ENCODE measurements at regions of chr15 and their contacts with region 1.

Region 1: DNA sequence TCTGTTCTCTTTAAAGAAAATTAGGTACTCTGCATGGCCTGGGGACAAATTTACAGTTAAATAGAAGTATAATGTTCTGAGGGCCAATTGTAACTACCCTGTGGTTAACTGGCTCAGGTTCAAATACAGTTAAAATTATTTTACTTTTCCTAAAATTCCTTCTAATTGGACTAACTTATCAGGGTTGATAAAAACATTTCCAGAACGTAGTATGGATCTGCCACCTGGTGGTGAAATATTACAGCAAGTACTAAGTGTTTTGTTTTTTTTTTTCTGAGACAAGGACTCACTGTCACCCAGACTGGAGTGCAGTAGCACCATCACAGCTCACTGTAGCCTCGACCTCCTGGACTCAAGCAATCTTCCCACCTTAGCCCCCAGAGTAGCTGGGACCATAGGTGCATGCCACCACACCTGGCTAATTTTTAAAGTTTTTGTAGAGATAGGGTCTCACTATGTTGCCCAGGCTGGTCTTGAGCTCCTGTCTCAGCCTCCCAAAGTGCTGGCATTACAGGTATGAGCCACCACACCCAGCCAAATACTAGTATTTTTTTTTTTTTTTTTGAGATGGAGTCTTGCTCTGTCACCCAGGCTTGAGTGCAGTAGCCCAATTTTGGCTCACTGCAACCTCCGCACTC is 29.2 kb downstream of the NEO1 start:
- DNase-seq: peak; percentile 65
- H3K4me3 ChIP-seq: no peak overlapping the region
- H3K27ac ChIP-seq: no peak overlapping the region
- H3K4me1 ChIP-seq: no peaks in the 10 kb centered on the region
- H3K27me3 ChIP-seq: peaks cover 49 to 77% of the 10 kb centered on the region in 2 experiments
- CTCF ChIP-seq: peak; percentile 21 to 44
- POLR2A ChIP-seq: no peak

Region 2: GRCh38 chr15:72783563-72784237 is 297.7 kb before region 1 on chr15 and contains the start of gene ADPGK:
- CTCF ChIA-PET with region 1: interaction called, 6 read pairs
- POLR2A ChIA-PET with region 1: no interaction called
- dilution Hi-C with region 1: no loop called
- intact Hi-C with region 1: loop called (anchors 1 kb)
- DNase-seq: peak; percentile 94
- H3K4me3 ChIP-seq: peak within 1 kb of the TSS; percentile 49 to 91 (median 61)
- H3K27ac ChIP-seq: peak within 1 kb of the TSS; percentile 61
- H3K4me1 ChIP-seq: peaks cover 10% of the 10 kb centered on the region
- H3K27me3 ChIP-seq: peaks cover 14 to 18% of the 10 kb centered on the region in 2 experiments
- CTCF ChIP-seq: no peak
- POLR2A ChIP-seq: peak; percentile 92
- total RNA-seq, gene ADPGK: 51.0 and 51.7 TPM in 2 replicates

Region 3: DNA sequence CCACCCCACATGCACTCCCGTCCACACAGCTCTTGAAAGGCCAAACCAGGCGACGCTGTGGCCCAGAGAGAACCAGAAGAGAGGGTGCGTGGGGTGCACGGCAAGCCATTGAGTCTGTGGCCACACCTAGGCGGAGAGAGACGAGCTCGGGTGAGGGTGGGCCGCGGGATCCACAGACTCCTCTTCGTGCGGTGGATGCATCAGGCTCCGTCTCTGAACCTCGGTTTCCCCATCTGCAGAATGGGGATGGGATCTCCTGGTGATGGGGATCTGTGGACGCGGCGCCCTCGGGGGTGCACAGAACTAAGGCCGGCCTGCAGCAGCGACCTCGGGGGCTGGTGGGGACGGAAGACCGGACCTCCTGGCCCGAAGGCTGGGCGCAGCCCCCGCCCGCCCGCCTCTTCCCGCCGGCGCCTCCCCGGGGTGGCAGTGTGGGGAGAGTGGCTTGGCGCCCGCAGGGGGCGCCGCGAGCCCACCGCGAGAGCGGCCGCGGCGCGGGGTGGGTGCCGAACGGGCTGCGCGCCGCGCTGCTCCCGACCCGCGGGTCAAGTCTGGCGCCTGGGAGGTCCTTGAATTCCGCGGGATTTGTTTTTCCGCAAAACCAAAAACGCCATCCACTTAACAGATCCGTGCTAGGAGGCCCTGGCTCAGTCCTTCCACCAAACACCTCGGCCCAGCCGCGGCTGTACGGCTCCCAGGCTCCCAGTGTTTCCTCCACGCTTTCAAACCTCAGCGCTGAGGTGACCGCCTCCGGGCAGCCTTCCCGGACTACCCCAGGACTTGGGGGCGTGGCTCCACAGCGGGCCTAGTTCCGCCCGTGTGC is 284.7 kb before region 1 on chr15:
- CTCF ChIA-PET with region 1: interaction called, 7 read pairs
- POLR2A ChIA-PET with region 1: no interaction called
- dilution Hi-C with region 1: no loop called
- intact Hi-C with region 1: loop called (anchors 1 kb)
- DNase-seq: peak; percentile 2
- H3K4me3 ChIP-seq: peak overlapping the region in 2 of 3 experiments; percentile 25 to 40
- H3K27ac ChIP-seq: no peak overlapping the region
- H3K4me1 ChIP-seq: peaks cover 6% of the 10 kb centered on the region
- H3K27me3 ChIP-seq: peaks cover 47 to 51% of the 10 kb centered on the region in 2 experiments
- CTCF ChIP-seq: peak; percentile 30 to 38
- POLR2A ChIP-seq: no peak

Region 4: DNA sequence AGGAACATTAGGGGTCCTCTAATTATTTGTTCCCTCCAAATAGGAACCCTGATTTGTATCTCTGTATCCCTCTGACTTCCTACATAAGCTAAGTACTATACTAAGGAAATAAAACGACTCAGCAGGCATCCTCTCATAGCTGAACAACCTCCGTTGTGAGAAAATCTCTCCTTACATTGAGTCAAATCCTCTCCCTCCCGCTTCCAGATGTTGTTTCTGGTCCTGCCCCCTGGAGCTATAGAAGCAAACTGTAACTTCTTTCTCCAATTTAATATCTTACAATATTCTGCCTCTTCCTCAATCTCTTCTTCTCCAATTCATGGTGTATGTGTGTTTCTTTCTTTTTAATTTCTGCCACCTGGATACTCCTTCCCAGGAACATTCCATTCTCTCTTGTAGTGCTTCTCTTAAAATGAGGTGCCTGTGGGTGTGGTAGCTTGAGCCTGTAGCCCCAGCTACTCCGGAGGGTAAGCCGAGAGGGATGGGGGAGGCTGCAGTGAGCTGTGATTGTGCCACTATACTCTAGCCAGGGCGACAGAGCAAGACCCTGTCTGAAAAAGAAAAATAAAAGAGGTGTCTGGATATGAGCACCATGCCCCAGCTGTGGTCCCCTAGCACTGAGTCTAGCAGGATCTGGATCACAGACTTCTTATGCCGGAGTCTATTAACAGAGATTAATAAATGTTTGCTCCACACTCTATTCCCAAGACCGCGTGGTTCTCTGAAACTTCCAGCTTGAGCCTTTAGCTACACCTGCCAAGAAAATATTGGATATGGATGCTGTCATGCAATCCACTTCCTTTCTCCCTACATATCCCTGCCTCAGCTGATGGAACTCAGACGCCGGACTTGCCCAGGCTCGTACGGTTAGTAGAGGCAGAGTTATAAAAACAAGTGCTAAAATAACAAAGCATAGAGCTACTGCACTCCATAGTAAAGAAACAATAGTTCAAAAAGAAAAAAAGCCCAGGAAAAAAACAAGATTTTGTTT is 72.1 kb before region 1 on chr15:
- CTCF ChIA-PET with region 1: no interaction called
- POLR2A ChIA-PET with region 1: no interaction called
- dilution Hi-C with region 1: no loop called
- intact Hi-C with region 1: no loop called
- DNase-seq: no peak
- H3K4me3 ChIP-seq: no peak overlapping the region
- H3K27ac ChIP-seq: no peak overlapping the region
- H3K4me1 ChIP-seq: no peaks in the 10 kb centered on the region
- H3K27me3 ChIP-seq: peaks cover 0 to 2% of the 10 kb centered on the region in 2 experiments
- CTCF ChIP-seq: no peak
- POLR2A ChIP-seq: no peak

Region 5: GRCh38 chr15:73051811-73052678 is 29.4 kb before region 1 on chr15 and contains the start of gene NEO1:
- CTCF ChIA-PET with region 1: interaction called, 4 read pairs
- POLR2A ChIA-PET with region 1: no interaction called
- dilution Hi-C with region 1: no loop called
- intact Hi-C with region 1: loop called (anchors 1 kb)
- DNase-seq: peak; percentile 25
- H3K4me3 ChIP-seq: peak within 1 kb of the TSS; percentile 29 to 48 (median 36)
- H3K27ac ChIP-seq: no peak within 1 kb of the TSS
- H3K4me1 ChIP-seq: peaks cover 8% of the 10 kb centered on the region
- H3K27me3 ChIP-seq: peaks cover 61 to 87% of the 10 kb centered on the region in 2 experiments
- CTCF ChIP-seq: no peak
- POLR2A ChIP-seq: no peak
- total RNA-seq, gene NEO1: 0.35 TPM in 2 replicates

Region 6: GRCh38 chr15:73069109-73069508 is 12.3 kb before region 1 on chr15:
- CTCF ChIA-PET with region 1: interaction called, 7 read pairs
- POLR2A ChIA-PET with region 1: no interaction called
- dilution Hi-C with region 1: no loop called
- intact Hi-C with region 1: loop called (anchors 1 kb)
- DNase-seq: no peak
- H3K4me3 ChIP-seq: no peak overlapping the region
- H3K27ac ChIP-seq: no peak overlapping the region
- H3K4me1 ChIP-seq: no peaks in the 10 kb centered on the region
- H3K27me3 ChIP-seq: peaks cover 49 to 72% of the 10 kb centered on the region in 2 experiments
- CTCF ChIP-seq: no peak
- POLR2A ChIP-seq: no peak

Region 7: DNA sequence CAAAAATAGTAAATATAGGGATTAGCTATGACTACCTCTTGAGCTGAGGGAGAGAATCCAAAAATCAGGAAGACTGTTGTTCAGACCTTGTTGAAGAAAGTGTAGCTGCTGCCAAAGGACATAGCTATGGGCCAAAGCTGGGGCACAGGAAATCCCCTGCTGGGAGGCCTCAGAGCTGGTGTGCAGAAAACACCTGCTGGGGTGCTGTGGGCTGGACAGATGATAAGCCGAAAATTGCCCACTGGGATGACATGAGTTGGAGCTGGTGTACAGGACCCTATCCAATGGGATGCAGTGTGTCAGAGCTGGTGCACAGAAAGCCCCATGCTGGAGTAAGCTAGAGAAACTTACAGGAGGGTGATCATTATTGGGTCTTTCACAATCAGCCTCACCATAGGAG is 92.7 kb after region 1 on chr15:
- CTCF ChIA-PET with region 1: no interaction called
- POLR2A ChIA-PET with region 1: no interaction called
- dilution Hi-C with region 1: no loop called
- intact Hi-C with region 1: no loop called
- DNase-seq: no peak
- H3K4me3 ChIP-seq: no peak overlapping the region
- H3K27ac ChIP-seq: no peak overlapping the region
- H3K4me1 ChIP-seq: no peaks in the 10 kb centered on the region
- H3K27me3 ChIP-seq: no peaks in the 10 kb centered on the region
- CTCF ChIP-seq: no peak
- POLR2A ChIP-seq: no peak